Activated CD4-positive, alpha-beta T cell treated with anti-CD3 and anti-CD28 coated beads for 36 hours (primary cell): ENCODE measurements at regions of chr22 and their contacts with region 1.

Region 1: GRCh38 chr22:28674121-28674563 is 5.5 kb downstream of the TTC28 start:
- DNase-seq: peak; percentile 38
- ATAC-seq: peak; percentile 58
- H3K4me3 Mint-ChIP-seq: peak overlapping the region; percentile 73
- H3K27ac Mint-ChIP-seq: peak overlapping the region; percentile 87
- H3K4me1 Mint-ChIP-seq: peaks cover 25% of the 10 kb centered on the region
- H3K27me3 Mint-ChIP-seq: peaks cover 63% of the 10 kb centered on the region

Region 2: GRCh38 chr22:28541137-28541536 is 133.0 kb before region 1 on chr22:
- CTCF ChIA-PET with region 1: no interaction called
- POLR2A ChIA-PET with region 1: no interaction called
- intact Hi-C with region 1: no loop called
- DNase-seq: no peak
- ATAC-seq: no peak
- H3K4me3 Mint-ChIP-seq: no peak overlapping the region
- H3K27ac Mint-ChIP-seq: no peak overlapping the region
- H3K4me1 Mint-ChIP-seq: no peaks in the 10 kb centered on the region
- H3K27me3 Mint-ChIP-seq: peaks cover 2% of the 10 kb centered on the region

Region 3: DNA sequence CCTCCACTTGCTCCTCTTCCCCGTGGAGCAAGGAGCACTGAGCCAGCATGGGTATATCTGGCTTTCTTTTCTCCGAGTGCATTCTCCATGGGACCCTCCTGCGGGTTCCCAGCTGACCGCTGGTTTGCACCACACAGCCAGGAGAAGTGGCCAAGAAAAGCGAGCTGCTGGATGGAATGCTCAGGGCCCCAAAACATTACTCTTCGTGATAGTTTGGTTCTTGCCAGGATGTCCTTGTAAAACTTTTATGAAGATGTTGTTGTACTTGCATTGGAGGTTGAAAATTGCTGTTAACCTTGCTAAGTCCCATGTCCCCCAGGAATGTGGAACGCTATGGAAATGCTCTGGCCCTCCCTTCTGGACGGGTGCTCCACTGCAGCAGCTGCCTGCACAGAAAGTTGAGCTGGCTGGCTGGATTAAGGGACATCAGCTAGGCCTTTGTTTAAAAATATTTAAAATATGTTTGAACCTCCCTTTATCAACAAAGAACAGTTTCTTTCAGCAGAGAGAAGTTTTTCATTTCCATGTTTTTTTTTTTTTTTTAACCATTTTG is 277.9 kb after region 1 on chr22:
- CTCF ChIA-PET with region 1: no interaction called
- POLR2A ChIA-PET with region 1: no interaction called
- intact Hi-C with region 1: loop called in 1 of 2 experiments (anchors 1 kb)
- DNase-seq: no peak
- ATAC-seq: no peak
- H3K4me3 Mint-ChIP-seq: no peak overlapping the region
- H3K27ac Mint-ChIP-seq: no peak overlapping the region
- H3K4me1 Mint-ChIP-seq: peaks cover 18% of the 10 kb centered on the region
- H3K27me3 Mint-ChIP-seq: peaks cover 71% of the 10 kb centered on the region